ENCODE measurements at regions of chr3 and their contacts with region 1.

Region 1: DNA sequence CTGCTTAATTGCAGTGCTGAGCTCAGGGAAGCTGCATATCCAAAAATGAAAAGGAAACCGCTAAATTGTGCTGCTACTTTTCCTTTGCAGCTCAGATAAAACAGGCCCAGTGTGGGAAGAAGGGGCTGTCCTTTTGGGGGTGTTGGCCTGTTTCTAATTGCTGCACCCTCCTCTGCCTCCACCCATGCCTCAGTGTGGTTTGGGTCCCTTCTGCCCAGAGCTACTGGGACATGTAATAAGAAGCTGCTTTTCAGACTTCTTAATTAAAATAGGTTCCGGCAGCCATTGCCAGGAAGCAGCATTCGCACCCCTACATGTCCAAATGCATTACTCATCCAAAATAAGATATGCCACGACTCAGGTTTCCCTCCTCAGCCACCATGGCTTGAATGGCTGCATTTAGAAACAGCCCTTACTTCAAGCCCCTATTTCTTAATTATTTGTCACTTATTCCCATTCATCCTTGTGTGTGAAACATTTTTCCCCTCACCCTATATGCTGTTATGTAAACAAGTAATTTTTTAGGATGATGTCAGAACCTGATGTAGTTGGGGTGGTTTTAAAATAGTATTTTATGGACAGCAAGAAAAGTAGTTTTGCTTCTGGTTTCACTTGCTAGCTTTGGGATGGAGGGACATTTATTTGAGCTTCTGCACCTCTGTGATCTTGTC is 235.9 kb upstream of the CTDSPL start:
- DNase-seq: no peak
- ATAC-seq: peak in 3 of 4 donors; percentile 25 to 31 (median 25)
- H3K4me3 ChIP-seq: peak overlapping the region in 1 of 12 donors; percentile 3
- H3K27ac ChIP-seq: peak overlapping the region in 2 of 12 donors; percentile 6 to 51
- H3K4me1 ChIP-seq: peaks cover 0 to 51% (median 43%) of the 10 kb centered on the region in 12 donors
- H3K27me3 ChIP-seq: no peaks in the 10 kb centered on the region
- CTCF ChIP-seq: no peak
- POLR2A ChIP-seq: no peak

Region 2: DNA sequence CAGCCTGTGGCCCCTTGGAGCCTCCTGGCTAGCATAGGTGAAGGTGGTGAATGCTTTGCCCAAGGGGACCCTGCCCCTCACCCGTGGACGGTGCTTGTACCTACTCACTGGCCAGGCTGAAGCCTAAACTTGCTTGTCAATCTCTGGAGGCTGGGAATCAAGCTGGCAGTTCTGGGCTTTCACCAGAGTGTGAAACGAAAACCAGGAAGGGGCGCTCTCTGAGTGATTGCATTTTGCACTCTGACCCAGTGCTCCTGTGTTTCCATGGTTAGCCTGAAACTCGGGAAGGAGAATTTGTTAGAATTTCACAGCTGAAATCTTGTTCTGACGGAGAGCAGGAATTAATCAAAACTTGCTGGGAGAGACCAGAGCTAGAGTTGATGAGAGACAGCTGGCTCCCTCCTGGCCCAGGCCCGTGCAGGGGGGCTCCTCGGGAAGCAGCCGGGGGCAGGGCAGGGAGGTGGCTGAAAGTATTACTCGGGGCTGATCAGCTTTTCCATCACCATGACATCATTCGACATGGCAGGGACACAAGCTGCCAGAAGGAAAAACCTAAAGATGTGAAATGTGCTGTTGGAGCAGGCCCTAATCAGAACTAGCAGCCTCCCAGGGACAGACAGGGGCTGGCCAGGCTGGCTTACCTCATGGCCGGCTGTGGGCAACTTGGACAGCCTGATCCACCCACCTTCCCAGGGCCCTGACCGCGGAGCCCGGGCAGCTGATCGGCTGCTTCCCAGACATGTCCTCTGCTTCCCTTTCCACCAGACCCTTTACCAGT is 87.7 kb before region 1 on chr3:
- intact Hi-C with region 1: no loop called
- DNase-seq: peak in 2 of 5 donors; percentile 46 to 60
- ATAC-seq: peak in 3 of 4 donors; percentile 55 to 60 (median 56)
- H3K4me3 ChIP-seq: no peak overlapping the region
- H3K27ac ChIP-seq: peak overlapping the region in 10 of 12 donors; percentile 17 to 78 (median 61)
- H3K4me1 ChIP-seq: peaks cover 0 to 71% (median 25%) of the 10 kb centered on the region in 12 donors
- H3K27me3 ChIP-seq: no peaks in the 10 kb centered on the region
- CTCF ChIP-seq: no peak
- POLR2A ChIP-seq: no peak

Region 3: GRCh38 chr3:37590328-37591079 is 35.3 kb before region 1 on chr3:
- intact Hi-C with region 1: loop called in 1 of 10 experiments (anchors 2 kb)
- DNase-seq: peak in 4 of 5 donors; percentile 34 to 68 (median 50)
- ATAC-seq: peak; percentile 65 to 80 (median 78)
- H3K4me3 ChIP-seq: no peak overlapping the region
- H3K27ac ChIP-seq: peak overlapping the region; percentile 38 to 92 (median 80)
- H3K4me1 ChIP-seq: peaks cover 0 to 77% (median 28%) of the 10 kb centered on the region in 12 donors
- H3K27me3 ChIP-seq: no peaks in the 10 kb centered on the region
- CTCF ChIP-seq: peak in 2 of 12 donors; percentile 13 to 17
- POLR2A ChIP-seq: no peak

Region 4: GRCh38 chr3:37608061-37608702 is 17.6 kb before region 1 on chr3:
- intact Hi-C with region 1: no loop called
- DNase-seq: no peak
- ATAC-seq: peak in 1 of 4 donors; percentile 45
- H3K4me3 ChIP-seq: no peak overlapping the region
- H3K27ac ChIP-seq: no peak overlapping the region
- H3K4me1 ChIP-seq: peaks cover 0 to 16% (median 7%) of the 10 kb centered on the region in 12 donors
- H3K27me3 ChIP-seq: no peaks in the 10 kb centered on the region
- CTCF ChIP-seq: no peak
- POLR2A ChIP-seq: no peak

Region 5: DNA sequence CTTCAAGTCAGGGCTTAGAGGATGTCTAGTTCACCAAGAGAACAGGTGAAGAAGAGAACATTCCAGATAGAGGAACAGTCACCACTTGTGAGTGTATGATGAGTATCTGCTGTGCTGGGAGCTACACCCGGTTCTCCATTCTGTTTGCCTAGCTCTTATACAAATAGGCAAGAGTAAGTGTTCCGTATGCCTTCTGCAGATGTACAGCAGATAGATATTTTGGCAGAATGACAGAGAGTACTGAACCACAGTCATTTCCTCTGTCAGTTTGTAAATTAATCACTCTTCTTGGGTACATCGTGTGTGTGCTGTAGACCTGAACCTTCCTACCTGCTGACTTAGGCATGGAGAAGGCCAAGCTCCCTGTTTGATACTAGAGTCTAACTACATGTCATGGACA is 127.6 kb after region 1 on chr3:
- intact Hi-C with region 1: no loop called
- DNase-seq: no peak
- ATAC-seq: no peak
- H3K4me3 ChIP-seq: no peak overlapping the region
- H3K27ac ChIP-seq: no peak overlapping the region
- H3K4me1 ChIP-seq: peaks cover 0 to 13% (median 0%) of the 10 kb centered on the region in 12 donors
- H3K27me3 ChIP-seq: no peaks in the 10 kb centered on the region
- CTCF ChIP-seq: no peak
- POLR2A ChIP-seq: no peak